CD8-positive, alpha-beta T cell (primary cell): ENCODE measurements at regions of chr15 and their contacts with region 1.

Region 1: GRCh38 chr15:66504563-66505429 is at the starts of genes RPL4 and ZWILCH:
- DNase-seq: peak; percentile 67 to 92 (median 80)
- ATAC-seq: peak; percentile 86
- H3K4me3 ChIP-seq: peak within 1 kb of the TSS; percentile 88 to 95
- H3K4me3 Mint-ChIP-seq: peak within 1 kb of the TSS; percentile 100
- H3K27ac ChIP-seq: peak within 1 kb of the TSS; percentile 90 to 97
- H3K27ac Mint-ChIP-seq: peak within 1 kb of the TSS; percentile 99
- H3K4me1 ChIP-seq: peaks cover 32% of the 10 kb centered on the region
- H3K4me1 Mint-ChIP-seq: peaks cover 44% of the 10 kb centered on the region
- H3K27me3 ChIP-seq: no peaks in the 10 kb centered on the region
- H3K27me3 Mint-ChIP-seq: no peaks in the 10 kb centered on the region
- CTCF ChIP-seq: no peak
- total RNA-seq, gene RPL4: 4,516 to 4,651 TPM
- total RNA-seq, gene ZWILCH: 7.9 to 8.5 TPM

Region 2: GRCh38 chr15:65292938-65293518 is 1211.8 kb before region 1 on chr15:
- CTCF ChIA-PET with region 1: no interaction called
- POLR2A ChIA-PET with region 1: no interaction called
- intact Hi-C with region 1: loop called in 1 of 2 experiments (anchors 10 kb)
- DNase-seq: no peak
- ATAC-seq: no peak
- H3K4me3 ChIP-seq: no peak overlapping the region
- H3K4me3 Mint-ChIP-seq: no peak overlapping the region
- H3K27ac ChIP-seq: no peak overlapping the region
- H3K27ac Mint-ChIP-seq: no peak overlapping the region
- H3K4me1 ChIP-seq: peaks cover 24% of the 10 kb centered on the region
- H3K4me1 Mint-ChIP-seq: peaks cover 25% of the 10 kb centered on the region
- H3K27me3 ChIP-seq: no peaks in the 10 kb centered on the region
- H3K27me3 Mint-ChIP-seq: no peaks in the 10 kb centered on the region
- CTCF ChIP-seq: no peak

Region 3: GRCh38 chr15:65610871-65611718 is 893.7 kb before region 1 on chr15 and contains the start of gene INTS14:
- CTCF ChIA-PET with region 1: no interaction called
- POLR2A ChIA-PET with region 1: no interaction called
- intact Hi-C with region 1: loop called in 1 of 2 experiments (anchors 5 kb)
- DNase-seq: peak; percentile 81 to 95 (median 92)
- ATAC-seq: peak; percentile 95
- H3K4me3 ChIP-seq: peak within 1 kb of the TSS; percentile 85 to 96
- H3K4me3 Mint-ChIP-seq: peak within 1 kb of the TSS; percentile 97
- H3K27ac ChIP-seq: peak within 1 kb of the TSS; percentile 80 to 95
- H3K27ac Mint-ChIP-seq: peak within 1 kb of the TSS; percentile 98
- H3K4me1 ChIP-seq: peaks cover 17% of the 10 kb centered on the region
- H3K4me1 Mint-ChIP-seq: peaks cover 43% of the 10 kb centered on the region
- H3K27me3 ChIP-seq: no peaks in the 10 kb centered on the region
- H3K27me3 Mint-ChIP-seq: no peaks in the 10 kb centered on the region
- CTCF ChIP-seq: peak; percentile 26
- total RNA-seq, gene INTS14: 26.7 to 28.6 TPM

Region 4: DNA sequence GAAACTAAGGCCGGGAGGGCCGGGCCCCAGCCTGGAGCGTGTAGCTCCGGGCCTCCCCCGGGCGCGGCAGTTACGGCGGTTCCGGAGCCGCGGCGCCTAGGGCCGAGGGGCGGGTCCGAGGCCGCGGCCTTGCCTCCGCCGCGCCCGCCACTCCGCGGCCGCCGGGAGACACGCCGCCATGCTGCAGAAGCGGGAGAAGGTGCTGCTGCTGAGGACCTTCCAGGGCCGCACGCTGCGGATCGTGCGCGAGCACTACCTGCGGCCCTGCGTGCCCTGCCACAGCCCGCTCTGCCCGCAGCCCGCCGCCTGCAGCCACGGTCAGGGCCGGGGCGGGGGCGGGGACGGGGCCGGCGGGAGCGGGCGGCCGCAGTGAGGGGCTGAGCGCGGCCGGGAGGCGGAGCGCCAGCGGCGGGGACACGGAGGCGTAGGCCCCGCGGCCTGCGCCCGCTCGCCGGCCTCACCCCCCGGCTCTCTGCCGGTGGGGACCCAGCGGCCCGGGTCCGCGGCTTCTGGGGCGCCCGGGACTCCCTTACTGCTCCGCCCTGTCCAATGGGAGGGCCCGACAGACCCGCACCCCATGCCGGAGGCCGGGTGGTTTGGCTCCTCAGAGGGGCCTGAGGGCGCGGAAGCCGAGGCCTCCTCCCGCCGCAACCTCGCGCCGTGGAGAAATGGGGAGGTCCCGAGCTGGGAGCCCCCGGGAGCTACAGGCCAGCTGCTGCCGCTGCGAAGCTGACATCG is 211.2 kb before region 1 on chr15 and contains the start of gene DIS3L:
- CTCF ChIA-PET with region 1: no interaction called
- POLR2A ChIA-PET with region 1: interaction called, 9 read pairs
- intact Hi-C with region 1: loop called (anchors 2 kb)
- DNase-seq: peak; percentile 21 to 83 (median 60)
- ATAC-seq: peak; percentile 72
- H3K4me3 ChIP-seq: peak within 1 kb of the TSS; percentile 67 to 72
- H3K4me3 Mint-ChIP-seq: peak within 1 kb of the TSS; percentile 86
- H3K27ac ChIP-seq: peak within 1 kb of the TSS; percentile 86 to 95
- H3K27ac Mint-ChIP-seq: peak within 1 kb of the TSS; percentile 93
- H3K4me1 ChIP-seq: peaks cover 39% of the 10 kb centered on the region
- H3K4me1 Mint-ChIP-seq: peaks cover 49% of the 10 kb centered on the region
- H3K27me3 ChIP-seq: no peaks in the 10 kb centered on the region
- H3K27me3 Mint-ChIP-seq: no peaks in the 10 kb centered on the region
- CTCF ChIP-seq: no peak
- total RNA-seq, gene DIS3L: 16.6 to 18.8 TPM

Region 5: DNA sequence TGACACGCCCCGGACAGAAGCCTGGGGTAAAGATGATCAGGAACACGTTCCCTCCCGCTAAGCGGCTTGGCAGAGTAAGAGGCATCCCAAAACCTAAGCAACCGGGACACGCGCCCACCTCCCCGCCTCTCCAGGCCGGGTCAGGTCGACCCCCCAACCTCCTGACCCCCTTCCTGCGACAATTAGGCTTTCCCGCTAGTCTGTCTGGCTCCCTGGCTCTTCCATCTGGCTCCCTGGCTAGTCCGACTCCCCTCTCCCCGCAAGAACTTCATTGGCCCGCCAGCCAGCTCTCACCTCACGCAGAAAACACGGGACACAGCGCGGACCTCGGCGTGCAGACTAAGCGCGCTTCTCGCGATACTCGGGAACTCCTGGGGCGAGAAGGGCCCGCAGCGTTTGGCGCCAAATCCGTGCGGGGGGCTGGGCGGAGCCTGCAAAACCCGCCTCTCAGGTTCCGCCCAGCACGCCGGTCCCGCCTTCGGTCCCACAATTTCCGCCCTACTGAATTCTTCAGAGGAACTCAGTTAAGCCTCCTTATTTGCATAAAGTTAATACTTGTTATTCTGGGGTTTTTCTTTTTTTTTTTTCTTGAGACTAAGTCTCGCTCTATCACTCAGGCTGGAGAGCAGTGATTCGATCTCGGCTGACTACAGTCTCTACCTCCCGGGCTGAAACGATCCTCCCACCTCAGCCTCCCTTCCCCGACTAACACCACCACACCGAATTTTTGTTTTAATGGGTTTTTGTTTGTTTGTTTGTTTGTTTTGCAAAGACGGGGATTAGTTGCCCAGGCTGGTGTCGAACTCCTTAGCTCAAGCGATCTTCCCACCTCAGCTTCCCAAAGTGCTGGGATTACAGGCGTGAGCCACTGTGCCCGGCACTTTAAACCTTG is 148.2 kb before region 1 on chr15 and contains the start of gene TIPIN:
- CTCF ChIA-PET with region 1: interaction called, 4 read pairs
- POLR2A ChIA-PET with region 1: interaction called, 4 read pairs
- intact Hi-C with region 1: loop called (anchors 1 kb)
- DNase-seq: peak; percentile 92 to 98 (median 97)
- ATAC-seq: peak; percentile 97
- H3K4me3 ChIP-seq: peak within 1 kb of the TSS; percentile 69 to 76
- H3K4me3 Mint-ChIP-seq: peak within 1 kb of the TSS; percentile 99
- H3K27ac ChIP-seq: peak within 1 kb of the TSS; percentile 50 to 69
- H3K27ac Mint-ChIP-seq: peak within 1 kb of the TSS; percentile 96
- H3K4me1 ChIP-seq: peaks cover 14% of the 10 kb centered on the region
- H3K4me1 Mint-ChIP-seq: peaks cover 19% of the 10 kb centered on the region
- H3K27me3 ChIP-seq: no peaks in the 10 kb centered on the region
- H3K27me3 Mint-ChIP-seq: no peaks in the 10 kb centered on the region
- CTCF ChIP-seq: no peak
- total RNA-seq, gene TIPIN: 4.8 to 4.9 TPM

Region 6: GRCh38 chr15:66483131-66483566 is 21.6 kb before region 1 on chr15:
- CTCF ChIA-PET with region 1: no interaction called
- POLR2A ChIA-PET with region 1: no interaction called
- intact Hi-C with region 1: no loop called
- DNase-seq: no peak
- ATAC-seq: no peak
- H3K4me3 ChIP-seq: no peak overlapping the region
- H3K4me3 Mint-ChIP-seq: no peak overlapping the region
- H3K27ac ChIP-seq: no peak overlapping the region
- H3K27ac Mint-ChIP-seq: no peak overlapping the region
- H3K4me1 ChIP-seq: no peaks in the 10 kb centered on the region
- H3K4me1 Mint-ChIP-seq: no peaks in the 10 kb centered on the region
- H3K27me3 ChIP-seq: no peaks in the 10 kb centered on the region
- H3K27me3 Mint-ChIP-seq: no peaks in the 10 kb centered on the region
- CTCF ChIP-seq: no peak

Region 7: DNA sequence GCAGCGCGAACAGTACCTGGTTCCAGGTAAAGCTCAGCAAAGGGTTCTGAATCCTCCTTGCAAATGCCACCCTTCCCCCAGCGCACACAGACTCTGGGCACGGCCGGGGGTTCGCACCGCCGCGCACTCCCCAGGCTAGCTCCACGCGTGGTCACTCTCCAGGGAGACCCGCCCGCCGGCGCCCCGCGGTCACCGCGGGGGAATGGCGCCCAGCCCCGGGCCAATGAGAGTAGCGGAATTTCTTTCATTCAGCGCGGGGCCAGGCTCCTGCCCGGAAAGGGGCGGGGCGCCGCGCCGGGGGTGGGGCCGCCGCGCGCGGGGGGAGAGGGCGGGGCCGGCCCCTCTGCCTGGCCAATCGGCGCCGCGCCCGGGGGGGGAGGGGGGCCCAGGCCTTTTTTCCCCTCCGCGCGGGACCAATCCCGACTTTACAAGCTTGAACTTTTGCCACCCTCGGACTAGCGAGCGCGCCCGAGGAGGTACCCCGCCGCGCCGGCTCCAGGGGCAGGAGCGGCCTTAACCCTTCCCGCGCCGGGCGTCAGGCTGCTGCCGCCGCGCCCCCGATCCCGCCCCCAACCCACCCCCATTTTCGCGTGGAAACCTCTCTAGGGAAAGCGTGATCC is 196.1 kb after region 1 on chr15:
- CTCF ChIA-PET with region 1: no interaction called
- POLR2A ChIA-PET with region 1: no interaction called
- intact Hi-C with region 1: loop called in 1 of 2 experiments (anchors 5 kb)
- DNase-seq: peak; percentile 62 to 87 (median 81)
- ATAC-seq: peak; percentile 81
- H3K4me3 ChIP-seq: peak overlapping the region; percentile 70 to 77
- H3K4me3 Mint-ChIP-seq: peak overlapping the region; percentile 94
- H3K27ac ChIP-seq: no peak overlapping the region
- H3K27ac Mint-ChIP-seq: peak overlapping the region; percentile 73
- H3K4me1 ChIP-seq: peaks cover 20% of the 10 kb centered on the region
- H3K4me1 Mint-ChIP-seq: peaks cover 21% of the 10 kb centered on the region
- H3K27me3 ChIP-seq: peaks cover 8 to 14% of the 10 kb centered on the region in 2 experiments
- H3K27me3 Mint-ChIP-seq: peaks cover 12% of the 10 kb centered on the region
- CTCF ChIP-seq: no peak

Region 8: GRCh38 chr15:67479781-67480505 is 975.1 kb after region 1 on chr15:
- CTCF ChIA-PET with region 1: no interaction called
- POLR2A ChIA-PET with region 1: no interaction called
- intact Hi-C with region 1: no loop called
- DNase-seq: no peak
- ATAC-seq: no peak
- H3K4me3 ChIP-seq: no peak overlapping the region
- H3K4me3 Mint-ChIP-seq: no peak overlapping the region
- H3K27ac ChIP-seq: no peak overlapping the region
- H3K27ac Mint-ChIP-seq: no peak overlapping the region
- H3K4me1 ChIP-seq: no peaks in the 10 kb centered on the region
- H3K4me1 Mint-ChIP-seq: peaks cover 10% of the 10 kb centered on the region
- H3K27me3 ChIP-seq: no peaks in the 10 kb centered on the region
- H3K27me3 Mint-ChIP-seq: no peaks in the 10 kb centered on the region
- CTCF ChIP-seq: no peak